ENCODE measurements at regions of chr11 and their contacts with region 1.

Region 1: DNA sequence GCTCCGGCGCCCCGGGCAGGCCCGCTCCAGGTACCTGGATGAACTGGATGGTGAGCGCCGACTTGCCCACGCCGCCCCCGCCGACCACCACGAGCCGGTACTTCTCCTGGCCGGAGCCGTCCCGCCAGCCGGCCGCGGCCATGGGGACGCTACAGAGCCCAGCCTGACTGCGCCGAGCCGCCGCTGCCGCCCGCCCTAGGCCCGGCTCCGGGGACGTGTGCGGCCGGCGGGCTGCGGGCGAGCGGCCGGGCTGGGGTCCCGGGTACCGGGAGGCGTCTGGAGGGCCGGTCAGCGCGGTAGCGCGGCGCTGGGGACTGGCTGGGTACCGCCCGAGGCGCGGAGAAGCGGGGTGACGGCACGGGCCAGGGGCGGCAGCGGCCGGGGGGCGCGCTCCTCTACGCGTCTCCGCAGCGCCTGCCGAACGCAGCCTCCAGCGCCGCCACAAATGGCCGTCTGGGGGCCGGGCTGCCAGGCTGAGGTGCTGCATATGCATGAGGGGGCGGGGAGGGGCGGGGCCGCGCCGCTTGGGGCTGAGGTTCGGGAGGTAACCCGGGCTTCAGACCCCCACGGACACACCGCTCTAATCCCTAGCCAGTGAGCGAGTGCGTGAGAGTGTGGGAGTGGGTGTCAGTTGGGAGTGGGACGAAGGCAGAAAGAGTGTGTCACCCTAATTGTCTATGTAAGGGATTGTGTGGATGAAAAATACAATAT is at the start of gene RRAS2:
- DNase-seq: peak; percentile 94
- H3K4me3 Mint-ChIP-seq: peak within 1 kb of the TSS; percentile 90
- H3K27ac Mint-ChIP-seq: peak within 1 kb of the TSS; percentile 86
- H3K4me1 Mint-ChIP-seq: peaks cover 44% of the 10 kb centered on the region
- H3K27me3 Mint-ChIP-seq: peaks cover 5% of the 10 kb centered on the region
- total RNA-seq, gene RRAS2: 78.9 and 80.6 TPM in 2 replicates

Region 2: DNA sequence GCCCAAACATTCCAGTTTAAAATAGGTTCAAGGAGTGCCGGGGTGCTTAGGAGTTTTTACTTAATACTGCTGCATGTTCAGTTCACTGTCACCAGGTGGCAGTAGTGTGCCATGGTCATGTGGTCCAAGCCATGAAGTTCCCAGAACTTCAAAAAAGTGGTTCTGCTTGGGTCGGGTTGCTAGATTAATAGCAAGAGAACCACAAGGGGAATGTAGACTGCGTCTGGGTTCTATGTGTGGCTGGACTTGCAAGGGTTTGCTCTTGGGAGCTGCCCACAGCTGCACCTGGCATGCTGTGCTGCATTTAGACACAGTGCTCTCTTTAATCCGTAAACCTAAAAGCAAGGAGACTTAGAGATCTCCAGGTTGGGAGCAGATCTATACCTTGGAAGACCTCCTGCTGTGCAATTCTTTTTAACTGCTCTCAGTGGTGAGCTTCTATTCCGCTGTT is 402.9 kb before region 1 on chr11:
- intact Hi-C with region 1: no loop called
- DNase-seq: peak; percentile 84
- H3K4me3 Mint-ChIP-seq: no peak overlapping the region
- H3K27ac Mint-ChIP-seq: no peak overlapping the region
- H3K4me1 Mint-ChIP-seq: no peaks in the 10 kb centered on the region
- H3K27me3 Mint-ChIP-seq: peaks cover 38% of the 10 kb centered on the region

Region 3: GRCh38 chr11:14258221-14258935 is 100.5 kb before region 1 on chr11:
- intact Hi-C with region 1: no loop called
- DNase-seq: no peak
- H3K4me3 Mint-ChIP-seq: no peak overlapping the region
- H3K27ac Mint-ChIP-seq: no peak overlapping the region
- H3K4me1 Mint-ChIP-seq: no peaks in the 10 kb centered on the region
- H3K27me3 Mint-ChIP-seq: no peaks in the 10 kb centered on the region

Region 4: GRCh38 chr11:14270690-14271542 is 88.0 kb before region 1 on chr11:
- intact Hi-C with region 1: loop called (anchors 5 kb)
- DNase-seq: peak; percentile 80
- H3K4me3 Mint-ChIP-seq: peak overlapping the region; percentile 72
- H3K27ac Mint-ChIP-seq: peak overlapping the region; percentile 84
- H3K4me1 Mint-ChIP-seq: peaks cover 24% of the 10 kb centered on the region
- H3K27me3 Mint-ChIP-seq: no peaks in the 10 kb centered on the region

Region 5: GRCh38 chr11:14308114-14308896 is 50.6 kb before region 1 on chr11:
- intact Hi-C with region 1: loop called (anchors 2 kb)
- DNase-seq: no peak
- H3K4me3 Mint-ChIP-seq: no peak overlapping the region
- H3K27ac Mint-ChIP-seq: no peak overlapping the region
- H3K4me1 Mint-ChIP-seq: peaks cover 24% of the 10 kb centered on the region
- H3K27me3 Mint-ChIP-seq: no peaks in the 10 kb centered on the region

Region 6: GRCh38 chr11:14336507-14337503 is 22.1 kb before region 1 on chr11:
- intact Hi-C with region 1: loop called (anchors 1 kb)
- DNase-seq: peak; percentile 65
- H3K4me3 Mint-ChIP-seq: peak overlapping the region; percentile 5
- H3K27ac Mint-ChIP-seq: peak overlapping the region; percentile 77
- H3K4me1 Mint-ChIP-seq: peaks cover 51% of the 10 kb centered on the region
- H3K27me3 Mint-ChIP-seq: no peaks in the 10 kb centered on the region

Region 7: DNA sequence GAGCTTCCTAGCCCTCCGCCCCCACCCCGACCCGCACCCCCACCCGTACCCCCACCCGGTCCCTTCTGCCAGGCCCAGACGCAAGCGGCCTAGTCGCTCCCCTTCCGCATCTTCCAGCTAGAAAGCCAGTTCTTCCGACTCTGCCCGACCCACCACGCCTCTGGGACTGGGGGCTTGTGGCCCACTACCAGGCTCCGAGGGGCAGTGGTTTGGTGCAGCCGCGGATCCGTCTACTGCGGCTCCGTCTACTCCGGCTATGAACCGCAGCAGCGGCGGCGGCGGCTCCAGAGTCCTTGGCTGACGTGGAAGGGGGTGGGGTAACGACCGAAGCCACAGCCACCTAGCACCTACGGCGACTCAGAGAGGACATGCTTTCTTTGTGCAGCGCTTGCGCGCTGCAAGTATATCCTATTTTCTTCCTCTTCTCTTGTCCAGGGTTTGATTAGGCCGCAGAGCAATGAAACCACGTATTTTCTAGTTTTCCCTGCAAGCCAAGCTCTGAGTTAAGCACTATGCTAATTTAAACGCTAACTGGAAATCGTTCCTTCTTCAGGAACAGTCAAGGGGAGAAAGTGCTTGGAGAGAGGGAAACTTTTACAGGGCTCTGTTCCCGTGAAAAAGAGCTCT is 140.8 kb after region 1 on chr11 and contains the start of gene COPB1:
- intact Hi-C with region 1: loop called (anchors 1 kb)
- DNase-seq: peak; percentile 98
- H3K4me3 Mint-ChIP-seq: peak within 1 kb of the TSS; percentile 99
- H3K27ac Mint-ChIP-seq: peak within 1 kb of the TSS; percentile 96
- H3K4me1 Mint-ChIP-seq: peaks cover 34% of the 10 kb centered on the region
- H3K27me3 Mint-ChIP-seq: no peaks in the 10 kb centered on the region
- total RNA-seq, gene COPB1: 91.8 and 93.5 TPM in 2 replicates

Measured in activated CD4-positive, alpha-beta T cell treated with anti-CD3 and anti-CD28 coated beads, Interleukin-2, amount 10 ng/mL, durations not matched to agents 24 days and 14 days (primary cell).